Panc1 (cell line): ENCODE measurements at regions of chr22 and their contacts with region 1.

Region 1: GRCh38 chr22:30754971-30755756 is 60.5 kb downstream of the OSBP2 start:
- DNase-seq: no peak
- ATAC-seq: peak; percentile 91
- H3K4me3 ChIP-seq: no peak overlapping the region
- H3K27ac ChIP-seq: no peak overlapping the region
- H3K4me1 ChIP-seq: no peaks in the 10 kb centered on the region
- H3K27me3 ChIP-seq: no peaks in the 10 kb centered on the region
- CTCF ChIP-seq: peak; percentile 78

Region 2: DNA sequence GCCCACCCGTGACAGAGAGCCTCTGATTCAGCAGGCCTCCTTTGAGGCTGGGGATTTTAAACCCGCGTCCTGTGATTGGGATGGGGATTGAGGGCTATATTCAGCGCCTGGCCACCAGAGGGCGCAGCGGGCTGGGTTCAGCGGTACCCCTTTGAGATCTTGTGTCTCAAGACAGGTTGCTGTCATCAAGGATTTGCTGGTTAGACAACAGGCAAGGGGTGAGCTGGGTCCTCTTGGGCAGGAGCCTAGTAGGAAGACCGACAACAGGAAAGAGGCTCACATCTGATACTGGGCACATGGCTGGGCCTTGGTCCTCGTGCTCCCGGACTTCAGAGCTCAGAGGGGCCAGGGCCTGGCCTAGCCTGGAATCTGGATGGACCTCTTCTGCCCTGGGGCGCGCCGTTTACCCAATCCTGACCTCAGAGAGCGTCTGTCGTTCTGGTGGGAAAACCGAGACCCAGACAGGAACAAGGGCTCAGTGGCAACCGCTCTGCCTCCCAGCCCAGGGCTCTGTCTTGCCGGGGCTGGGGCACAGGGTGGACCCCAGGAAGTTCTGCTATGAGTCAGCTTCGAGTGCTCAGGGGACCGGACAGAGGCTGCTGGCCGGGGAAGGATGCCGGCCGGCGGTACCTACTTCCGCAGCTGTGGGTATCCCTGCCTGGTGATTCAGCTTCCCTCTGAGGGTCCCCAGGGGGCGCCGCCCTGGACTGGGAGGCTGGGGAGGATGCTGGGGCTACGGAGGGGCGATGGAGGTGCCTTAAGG is 120.5 kb before region 1 on chr22:
- CTCF ChIA-PET with region 1: interaction called, 25 read pairs
- POLR2A ChIA-PET with region 1: no interaction called
- in situ Hi-C with region 1: no loop called
- intact Hi-C with region 1: loop called (anchors 1 kb)
- DNase-seq: peak; percentile 73
- ATAC-seq: peak; percentile 74
- H3K4me3 ChIP-seq: peak overlapping the region; percentile 57 to 60
- H3K27ac ChIP-seq: 0 out of 2 replicates have a peak overlapping the region, but pooled peaks have one; percentile 39
- H3K4me1 ChIP-seq: peaks cover 10% of the 10 kb centered on the region; the same call in 1 of the 2 replicates
- H3K27me3 ChIP-seq: no peaks in the 10 kb centered on the region
- CTCF ChIP-seq: peak; percentile 91

Region 3: DNA sequence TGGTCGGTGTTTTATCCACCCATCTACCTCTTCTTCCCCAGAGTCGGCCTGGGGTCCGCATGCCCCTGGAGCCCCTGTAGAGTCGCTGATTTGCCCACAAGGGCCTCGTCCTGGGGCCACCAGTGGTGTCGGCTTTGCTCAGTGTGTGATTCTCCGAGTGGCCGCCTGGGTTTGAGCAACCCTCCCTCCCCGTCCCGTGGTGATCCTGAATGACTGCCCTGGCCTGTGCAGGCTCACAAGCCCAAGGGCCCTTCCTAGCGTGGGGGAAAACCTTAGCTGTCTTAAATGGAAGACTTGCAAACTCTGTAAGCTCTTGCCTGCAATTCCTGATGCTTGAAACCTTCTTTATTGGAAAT is 67.8 kb after region 1 on chr22:
- CTCF ChIA-PET with region 1: interaction called, 10 read pairs
- POLR2A ChIA-PET with region 1: no interaction called
- in situ Hi-C with region 1: no loop called
- intact Hi-C with region 1: no loop called
- DNase-seq: no peak
- ATAC-seq: peak; percentile 86
- H3K4me3 ChIP-seq: no peak overlapping the region; a peak in 2 of 4 replicates
- H3K27ac ChIP-seq: no peak overlapping the region
- H3K4me1 ChIP-seq: no peaks in the 10 kb centered on the region
- H3K27me3 ChIP-seq: peaks cover 3% of the 10 kb centered on the region; the same call in 1 of the 2 replicates
- CTCF ChIP-seq: no peak

Region 4: DNA sequence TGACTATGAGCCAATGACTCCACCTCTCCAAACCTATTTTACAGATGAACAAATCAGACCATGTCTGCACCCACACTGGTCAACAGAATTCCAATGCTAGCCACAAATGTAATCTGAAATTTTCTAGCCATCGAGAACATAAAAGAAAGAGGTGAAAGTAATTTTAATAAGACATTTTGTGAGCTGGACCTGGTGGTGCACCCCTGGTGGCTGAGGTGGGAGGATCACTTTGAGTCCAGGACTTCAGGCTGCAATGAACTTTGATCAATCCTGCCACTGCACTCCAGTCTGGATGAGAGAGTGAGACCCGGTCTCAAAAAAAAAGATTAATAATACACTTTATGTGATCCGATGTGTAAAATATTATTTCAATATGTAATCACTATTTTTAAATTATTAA is 395.5 kb after region 1 on chr22:
- CTCF ChIA-PET with region 1: no interaction called
- POLR2A ChIA-PET with region 1: no interaction called
- in situ Hi-C with region 1: no loop called
- intact Hi-C with region 1: no loop called
- DNase-seq: no peak
- ATAC-seq: no peak
- H3K4me3 ChIP-seq: no peak overlapping the region
- H3K27ac ChIP-seq: no peak overlapping the region
- H3K4me1 ChIP-seq: no peaks in the 10 kb centered on the region
- H3K27me3 ChIP-seq: no peaks in the 10 kb centered on the region
- CTCF ChIP-seq: no peak; the same call in none of the 2 replicates